ENCODE measurements at regions of chr18 and their contacts with region 1.

Region 1: GRCh38 chr18:70720607-70721006 is 431.8 kb downstream of the SOCS6 start:
- DNase-seq: no peak
- ATAC-seq: no peak
- H3K4me3 ChIP-seq: no peak overlapping the region
- H3K27ac ChIP-seq: no peak overlapping the region
- H3K4me1 ChIP-seq: no peaks in the 10 kb centered on the region
- H3K27me3 ChIP-seq: no peaks in the 10 kb centered on the region
- CTCF ChIP-seq: no peak
- POLR2A ChIP-seq: no peak

Region 2: DNA sequence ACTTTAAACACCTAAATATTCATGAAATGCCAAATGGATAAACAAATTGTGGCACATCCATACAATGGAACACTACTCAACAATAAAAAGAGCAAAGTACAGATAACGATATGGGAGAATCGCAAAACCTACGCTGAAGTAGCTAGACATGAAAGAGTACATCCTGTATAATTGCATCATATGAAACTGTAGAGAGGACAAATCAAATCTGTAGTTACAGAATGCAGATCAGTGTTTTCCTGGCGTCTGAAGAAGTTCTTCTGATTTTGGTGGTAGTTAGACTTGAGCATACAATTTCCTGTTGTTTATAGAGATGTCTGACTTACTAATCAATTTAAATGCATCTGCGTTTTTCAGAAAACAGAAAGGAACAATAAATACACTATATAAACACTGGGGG is 37.3 kb before region 1 on chr18:
- in situ Hi-C with region 1: no loop called
- intact Hi-C with region 1: no loop called
- DNase-seq: no peak
- ATAC-seq: no peak
- H3K4me3 ChIP-seq: no peak overlapping the region
- H3K27ac ChIP-seq: no peak overlapping the region
- H3K4me1 ChIP-seq: no peaks in the 10 kb centered on the region
- H3K27me3 ChIP-seq: no peaks in the 10 kb centered on the region
- CTCF ChIP-seq: no peak
- POLR2A ChIP-seq: no peak

Region 3: GRCh38 chr18:70822117-70822516 is 101.5 kb after region 1 on chr18:
- in situ Hi-C with region 1: loop called in 1 of 4 experiments (anchors 25 kb)
- intact Hi-C with region 1: no loop called
- DNase-seq: no peak
- ATAC-seq: no peak
- H3K4me3 ChIP-seq: no peak overlapping the region
- H3K27ac ChIP-seq: no peak overlapping the region
- H3K4me1 ChIP-seq: no peaks in the 10 kb centered on the region
- H3K27me3 ChIP-seq: no peaks in the 10 kb centered on the region
- CTCF ChIP-seq: no peak
- POLR2A ChIP-seq: no peak